Activated CD4-positive, alpha-beta memory T cell treated with anti-CD3 and anti-CD28 coated beads for 36 hours (primary cell): ENCODE measurements at regions of chr9 and their contacts with region 1.

Region 1: GRCh38 chr9:105244003-105244733 is at the start of gene SLC44A1:
- DNase-seq: peak; percentile 95
- H3K4me3 Mint-ChIP-seq: peak within 1 kb of the TSS; percentile 82
- H3K27ac Mint-ChIP-seq: peak within 1 kb of the TSS; percentile 60
- H3K4me1 Mint-ChIP-seq: peaks cover 16% of the 10 kb centered on the region
- H3K27me3 Mint-ChIP-seq: peaks cover 6% of the 10 kb centered on the region
- total RNA-seq, gene SLC44A1: 11.8 to 12.2 TPM

Region 2: DNA sequence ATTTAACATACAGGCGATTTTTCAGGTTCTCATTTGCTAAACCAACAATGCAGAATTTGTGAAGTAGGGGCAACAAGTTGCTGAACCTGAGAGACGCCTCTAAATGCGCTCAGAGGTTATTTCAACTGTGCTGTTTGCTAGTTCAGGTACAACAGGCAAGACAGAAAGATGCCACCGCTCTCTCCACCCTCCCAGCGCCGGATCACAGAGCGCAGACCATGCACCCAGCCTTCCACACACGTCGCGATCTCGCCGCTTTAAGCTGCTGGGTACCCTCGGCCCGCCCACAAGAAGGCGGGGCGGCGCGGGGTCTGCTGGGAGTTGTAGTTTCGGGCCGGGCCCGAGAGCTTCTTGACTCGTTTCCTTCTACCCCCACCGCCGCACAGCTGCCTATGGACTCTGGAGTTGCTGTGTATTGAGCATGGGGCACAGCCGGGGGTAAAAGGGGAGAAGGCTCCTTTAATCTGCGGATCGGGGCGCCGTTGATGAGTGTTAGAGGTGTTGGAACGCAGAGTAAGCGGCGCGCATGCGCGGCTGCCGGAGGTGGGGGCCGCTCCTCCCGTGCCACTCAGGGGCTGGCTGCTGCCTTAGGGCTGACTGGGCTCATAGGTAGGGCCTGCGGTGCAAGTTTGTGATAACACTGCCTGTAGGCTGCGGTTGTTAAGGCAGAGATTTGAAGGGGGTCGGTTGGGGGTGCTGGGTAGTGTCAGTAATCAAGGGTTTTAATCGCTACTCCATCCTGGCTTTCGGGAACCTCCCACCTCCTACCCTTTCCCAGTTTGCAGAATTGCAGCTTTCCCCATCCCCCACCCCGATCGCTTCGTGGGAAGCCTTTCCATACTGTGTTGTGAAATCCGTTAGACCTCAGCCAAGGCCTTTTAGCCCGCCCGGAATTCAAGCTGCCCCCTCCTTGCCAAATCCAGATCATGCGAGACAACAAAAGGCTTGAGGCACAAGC is 275.9 kb before region 1 on chr9:
- CTCF ChIA-PET with region 1: no interaction called
- POLR2A ChIA-PET with region 1: no interaction called
- intact Hi-C with region 1: loop called (anchors 2 kb)
- DNase-seq: peak; percentile 92
- H3K4me3 Mint-ChIP-seq: peak overlapping the region; percentile 89
- H3K27ac Mint-ChIP-seq: peak overlapping the region; percentile 84
- H3K4me1 Mint-ChIP-seq: peaks cover 10% of the 10 kb centered on the region
- H3K27me3 Mint-ChIP-seq: peaks cover 15% of the 10 kb centered on the region

Region 3: GRCh38 chr9:105359892-105360291 is 115.7 kb after region 1 on chr9:
- CTCF ChIA-PET with region 1: interaction called, 5 read pairs
- POLR2A ChIA-PET with region 1: interaction called, 7 read pairs
- intact Hi-C with region 1: loop called (anchors 1 kb)
- DNase-seq: peak; percentile 84
- H3K4me3 Mint-ChIP-seq: no peak overlapping the region
- H3K27ac Mint-ChIP-seq: no peak overlapping the region
- H3K4me1 Mint-ChIP-seq: peaks cover 13% of the 10 kb centered on the region
- H3K27me3 Mint-ChIP-seq: no peaks in the 10 kb centered on the region

Region 4: GRCh38 chr9:105414947-105415661 is 170.9 kb after region 1 on chr9:
- CTCF ChIA-PET with region 1: interaction called, 7 read pairs
- POLR2A ChIA-PET with region 1: no interaction called
- intact Hi-C with region 1: loop called (anchors 2 kb)
- DNase-seq: peak; percentile 53
- H3K4me3 Mint-ChIP-seq: no peak overlapping the region
- H3K27ac Mint-ChIP-seq: no peak overlapping the region
- H3K4me1 Mint-ChIP-seq: peaks cover 4% of the 10 kb centered on the region
- H3K27me3 Mint-ChIP-seq: peaks cover 37% of the 10 kb centered on the region

Region 5: GRCh38 chr9:105557771-105558610 is 313.8 kb after region 1 on chr9 and contains the start of gene FKTN:
- CTCF ChIA-PET with region 1: no interaction called
- POLR2A ChIA-PET with region 1: no interaction called
- intact Hi-C with region 1: loop called (anchors 5 kb)
- DNase-seq: peak; percentile 90
- H3K4me3 Mint-ChIP-seq: peak within 1 kb of the TSS; percentile 94
- H3K27ac Mint-ChIP-seq: peak within 1 kb of the TSS; percentile 52
- H3K4me1 Mint-ChIP-seq: peaks cover 21% of the 10 kb centered on the region
- H3K27me3 Mint-ChIP-seq: no peaks in the 10 kb centered on the region
- total RNA-seq, gene FKTN: 15.8 to 16.8 TPM